ENCODE measurements at regions of chr9 and their contacts with region 1.

Region 1: DNA sequence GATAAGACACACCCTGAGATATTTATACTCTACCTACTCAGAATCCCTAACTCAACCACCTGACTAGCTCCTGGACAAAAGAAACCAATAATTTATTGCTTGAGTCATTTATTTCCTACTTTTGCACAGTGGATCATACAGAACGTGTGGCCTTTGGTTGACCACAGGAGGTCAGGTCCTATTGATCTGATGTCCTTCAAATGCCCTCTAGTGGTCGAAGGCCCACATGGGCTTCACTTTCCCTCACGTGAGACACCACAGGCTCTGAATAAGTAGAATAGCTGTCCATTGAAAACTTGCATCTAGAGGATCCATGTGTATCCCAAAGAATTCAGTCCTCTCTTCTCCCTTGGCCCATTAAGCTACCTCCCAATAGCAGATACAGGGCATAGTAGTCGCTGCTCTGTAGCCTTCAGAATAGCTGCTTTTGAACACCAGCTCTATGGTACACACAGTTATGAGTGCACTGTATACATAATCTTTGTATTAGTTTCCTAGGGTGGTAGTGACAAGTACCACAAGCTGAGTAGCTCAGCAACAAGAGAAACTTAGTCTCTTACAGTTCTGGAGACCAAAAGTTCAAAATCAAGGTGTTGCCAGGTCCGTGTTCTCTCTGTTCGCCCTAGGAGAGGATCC is 177.6 kb upstream of the SMARCA2 start:
- DNase-seq: peak; percentile 46 to 61
- H3K4me3 ChIP-seq: no peak overlapping the region
- H3K27ac ChIP-seq: no peak overlapping the region
- H3K4me1 ChIP-seq: no peaks in the 10 kb centered on the region; a peak in 1 of 7 replicates
- H3K27me3 ChIP-seq: no peaks in the 10 kb centered on the region
- CTCF ChIP-seq: peak; percentile 71 to 89 (median 79)
- EP300 ChIP-seq: no peak
- POLR2A ChIP-seq: no peak
- RAD21 ChIP-seq: peak; percentile 82 to 89

Region 2: GRCh38 chr9:1718836-1719235 is 118.7 kb before region 1 on chr9:
- CTCF ChIA-PET with region 1: interaction called, 11 read pairs
- POLR2A ChIA-PET with region 1: no interaction called
- DNase-seq: no peak
- H3K4me3 ChIP-seq: no peak overlapping the region
- H3K27ac ChIP-seq: no peak overlapping the region
- H3K4me1 ChIP-seq: peaks cover 0 to 5% (median 2%) of the 10 kb centered on the region in 4 experiments; a peak in 3 of 7 replicates
- H3K27me3 ChIP-seq: no peaks in the 10 kb centered on the region
- CTCF ChIP-seq: no peak
- EP300 ChIP-seq: no peak
- POLR2A ChIP-seq: no peak
- RAD21 ChIP-seq: peak in 1 of 2 experiments; percentile 20; a peak in 1 of 4 replicates

Region 3: GRCh38 chr9:1732670-1733069 is 104.9 kb before region 1 on chr9:
- CTCF ChIA-PET with region 1: interaction called, 53 read pairs
- POLR2A ChIA-PET with region 1: no interaction called
- DNase-seq: no peak
- H3K4me3 ChIP-seq: no peak overlapping the region
- H3K27ac ChIP-seq: no peak overlapping the region
- H3K4me1 ChIP-seq: no peaks in the 10 kb centered on the region
- H3K27me3 ChIP-seq: peaks cover 0 to 1% (median under 1%) of the 10 kb centered on the region in 4 experiments; a peak in 3 of 7 replicates
- CTCF ChIP-seq: peak in 2 of 3 experiments; percentile 31 to 44; a peak in 2 of 4 replicates
- EP300 ChIP-seq: no peak
- POLR2A ChIP-seq: no peak
- RAD21 ChIP-seq: peak; percentile 35 to 56

Region 4: GRCh38 chr9:1869843-1870242 is 32.3 kb after region 1 on chr9:
- CTCF ChIA-PET with region 1: interaction called, 27 read pairs
- POLR2A ChIA-PET with region 1: no interaction called
- DNase-seq: peak; percentile 49 to 64
- H3K4me3 ChIP-seq: no peak overlapping the region
- H3K27ac ChIP-seq: no peak overlapping the region
- H3K4me1 ChIP-seq: peaks cover 0 to 13% (median 3%) of the 10 kb centered on the region in 4 experiments; a peak in 4 of 7 replicates
- H3K27me3 ChIP-seq: no peaks in the 10 kb centered on the region
- CTCF ChIP-seq: peak; percentile 42 to 82 (median 74)
- EP300 ChIP-seq: no peak
- POLR2A ChIP-seq: no peak
- RAD21 ChIP-seq: peak; percentile 86 to 90

Region 5: DNA sequence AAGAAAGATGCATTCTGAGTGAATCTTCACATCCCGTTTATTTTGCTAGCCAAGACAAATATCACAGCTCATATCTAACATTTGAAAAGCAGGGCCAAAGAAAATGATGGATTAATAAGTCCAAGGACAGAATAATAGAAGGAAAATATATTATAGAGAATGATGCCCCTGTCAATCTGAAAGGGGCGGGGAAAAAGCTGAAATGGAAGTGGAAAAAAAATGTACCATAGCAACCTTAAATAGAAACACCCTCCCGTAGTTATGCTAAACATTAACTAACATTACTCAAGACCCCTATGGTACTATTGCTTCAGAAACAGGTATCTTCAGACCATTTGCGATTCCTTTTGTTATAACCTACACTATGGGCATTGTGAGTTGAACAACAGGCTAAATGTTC is 109.9 kb after region 1 on chr9:
- CTCF ChIA-PET with region 1: no interaction called
- POLR2A ChIA-PET with region 1: no interaction called
- DNase-seq: no peak
- H3K4me3 ChIP-seq: no peak overlapping the region
- H3K27ac ChIP-seq: no peak overlapping the region
- H3K4me1 ChIP-seq: peaks cover 0 to 17% (median 7%) of the 10 kb centered on the region in 4 experiments; a peak in 4 of 7 replicates
- H3K27me3 ChIP-seq: no peaks in the 10 kb centered on the region
- CTCF ChIP-seq: no peak
- EP300 ChIP-seq: no peak
- POLR2A ChIP-seq: no peak
- RAD21 ChIP-seq: no peak

Region 6: DNA sequence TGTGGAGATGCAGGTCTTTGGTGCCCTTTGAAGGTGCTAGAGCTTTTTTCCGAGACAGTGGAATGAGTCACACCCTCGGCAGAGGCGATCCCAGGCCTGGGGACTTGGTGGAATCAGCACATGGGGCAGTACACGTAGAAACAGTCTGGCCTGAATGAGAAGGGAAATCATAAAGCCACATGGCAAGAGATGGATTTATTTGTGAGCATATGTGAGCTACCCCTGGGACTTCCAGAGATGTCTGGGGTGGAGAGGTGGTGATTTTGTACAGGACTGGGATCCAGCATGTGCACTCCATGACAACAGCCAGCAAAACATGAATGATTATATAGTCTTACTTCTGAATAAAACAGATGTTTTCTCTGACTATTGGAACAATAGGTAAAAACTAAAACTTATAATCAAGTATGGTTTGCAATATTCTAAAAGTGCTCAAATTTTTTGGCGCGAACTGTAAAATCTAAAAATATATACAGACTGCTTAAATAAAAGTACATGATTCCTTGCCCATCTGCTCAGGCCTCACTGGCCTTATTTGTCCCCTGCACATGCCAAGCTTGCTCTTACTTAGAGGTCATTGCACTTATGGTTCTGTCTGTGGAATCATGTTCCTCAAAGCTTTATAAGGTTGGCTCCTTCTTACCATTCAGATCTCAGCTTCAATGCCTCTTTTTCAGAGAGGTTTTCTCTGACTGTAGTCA is 122.9 kb after region 1 on chr9:
- CTCF ChIA-PET with region 1: no interaction called
- POLR2A ChIA-PET with region 1: no interaction called
- DNase-seq: no peak
- H3K4me3 ChIP-seq: no peak overlapping the region
- H3K27ac ChIP-seq: no peak overlapping the region
- H3K4me1 ChIP-seq: no peaks in the 10 kb centered on the region; a peak in 2 of 7 replicates
- H3K27me3 ChIP-seq: no peaks in the 10 kb centered on the region
- CTCF ChIP-seq: no peak
- EP300 ChIP-seq: no peak
- POLR2A ChIP-seq: no peak
- RAD21 ChIP-seq: no peak